ENCODE measurements at regions of chr14 and their contacts with region 1.

Region 1: DNA sequence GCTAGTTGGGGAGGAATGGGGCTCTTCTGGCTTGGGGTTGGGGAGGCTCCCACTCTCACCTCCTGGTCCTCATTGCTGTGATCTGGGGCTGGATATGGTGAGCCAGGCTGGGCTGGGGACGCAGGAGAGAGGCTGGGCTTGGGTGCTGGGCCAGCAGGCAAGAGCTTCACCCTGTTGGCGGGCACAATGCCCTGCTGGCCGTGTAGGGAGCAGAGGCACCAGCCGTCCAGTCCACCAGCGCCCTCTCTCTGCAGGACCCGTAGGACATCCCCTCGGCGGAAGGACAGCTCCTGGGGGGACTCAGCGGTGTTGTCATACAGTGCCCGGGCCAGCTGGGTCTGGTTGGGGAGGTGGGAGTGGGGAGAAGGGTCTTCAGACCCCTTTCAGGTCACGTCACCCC is 4.5 kb downstream of the EFS start:
- DNase-seq: no peak
- H3K4me3 ChIP-seq: no peak overlapping the region
- H3K27ac ChIP-seq: no peak overlapping the region
- H3K4me1 ChIP-seq: peaks cover 0 to 11% (median 5%) of the 10 kb centered on the region in 4 experiments
- H3K27me3 ChIP-seq: peaks cover 2 to 36% (median 23%) of the 10 kb centered on the region in 5 experiments

Region 2: DNA sequence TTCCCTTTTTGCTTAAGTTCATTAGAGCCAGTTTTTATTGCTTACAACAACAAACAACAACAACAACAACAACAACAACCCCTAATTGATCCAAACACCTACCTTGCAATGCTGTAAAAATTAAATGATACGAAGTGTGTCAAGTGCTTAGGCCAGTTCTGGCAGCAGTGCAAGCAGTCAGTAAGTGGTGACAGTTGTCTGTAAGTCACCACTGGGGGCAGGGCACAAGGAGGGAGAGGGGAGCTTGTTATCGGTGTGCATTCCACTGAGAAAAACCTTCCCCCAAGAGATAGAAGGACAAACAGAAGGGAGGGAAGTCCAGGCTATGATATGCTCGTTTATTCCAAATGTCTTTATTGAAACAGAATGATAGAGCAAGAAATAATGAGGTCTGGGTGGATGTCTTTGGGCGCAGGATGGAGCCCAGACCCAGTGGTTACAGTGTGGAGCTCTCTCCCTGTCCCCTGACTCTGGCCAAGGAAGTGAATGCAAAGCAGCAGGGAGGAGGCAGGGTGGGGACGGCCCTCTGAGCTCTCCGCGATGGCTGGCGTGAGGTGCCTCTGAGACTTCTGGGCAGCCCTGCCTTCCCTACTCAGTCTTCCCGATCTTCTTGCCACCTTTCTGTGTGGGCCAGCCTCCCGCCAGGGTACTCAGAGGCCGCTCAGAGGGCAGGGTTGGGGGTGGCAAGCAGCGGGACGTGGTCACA is 14.4 kb before region 1 on chr14:
- CTCF ChIA-PET with region 1: interaction called, 16 read pairs
- POLR2A ChIA-PET with region 1: interaction called, 3 read pairs
- DNase-seq: no peak
- H3K4me3 ChIP-seq: no peak overlapping the region
- H3K27ac ChIP-seq: no peak overlapping the region
- H3K4me1 ChIP-seq: no peaks in the 10 kb centered on the region
- H3K27me3 ChIP-seq: peaks cover 0 to 8% (median 0%) of the 10 kb centered on the region in 5 experiments

Measured in common myeloid progenitor, CD34-positive (primary cell).